ENCODE measurements at regions of chr1 and their contacts with region 1.

Region 1: DNA sequence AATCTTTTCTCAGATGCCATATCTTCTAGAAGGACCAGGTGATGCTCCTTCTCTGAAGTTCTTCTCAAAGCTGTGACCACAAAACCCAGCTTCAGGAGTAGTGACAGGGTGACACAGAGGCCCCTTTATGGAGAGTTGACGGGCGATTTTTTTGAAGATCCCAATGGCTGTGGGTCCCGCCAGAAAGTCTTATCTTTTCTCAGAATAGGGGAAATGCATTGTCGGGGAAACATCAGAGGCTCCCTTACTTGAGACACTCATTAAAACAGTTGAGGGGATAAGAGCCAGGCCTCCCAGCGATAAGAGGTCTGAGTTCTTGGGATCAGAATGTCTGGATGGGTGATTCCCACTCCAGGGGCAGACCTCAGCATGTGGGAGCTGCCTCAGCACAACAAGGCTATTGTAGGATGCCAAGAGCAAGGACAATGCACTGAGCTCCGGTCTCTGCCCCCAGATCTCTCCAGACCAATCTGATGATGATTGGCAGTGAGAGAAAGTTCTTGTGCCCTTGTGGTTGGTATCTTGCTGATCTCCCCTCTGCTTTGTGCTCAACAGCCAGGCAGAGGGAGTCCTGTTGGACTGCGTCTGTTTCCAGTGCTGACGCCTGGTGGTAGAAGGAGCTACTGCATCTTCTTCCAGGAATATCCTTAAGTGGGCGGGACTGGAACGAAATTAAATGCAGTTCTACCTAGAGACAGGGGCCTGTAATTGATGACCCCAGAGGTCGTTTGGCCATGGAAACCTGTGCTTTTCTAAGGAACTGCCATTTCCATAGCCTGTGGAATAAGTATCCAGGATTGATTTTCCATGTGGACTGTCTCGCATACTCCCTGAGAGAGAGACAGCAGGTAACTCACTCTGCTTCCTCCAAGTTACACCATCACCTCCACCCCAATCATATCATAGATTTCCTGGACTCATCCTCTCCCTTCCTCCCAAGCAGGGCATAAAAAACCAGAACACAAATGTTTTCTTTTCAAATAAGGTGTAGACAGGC is 6.8 kb upstream of the ACKR1 start:
- DNase-seq: peak; percentile 26
- H3K4me3 ChIP-seq: no peak overlapping the region
- H3K27ac ChIP-seq: no peak overlapping the region
- H3K27me3 ChIP-seq: no peaks in the 10 kb centered on the region
- CTCF ChIP-seq: peak; percentile 98

Region 2: GRCh38 chr1:159161001-159161718 is 36.7 kb before region 1 on chr1:
- CTCF ChIA-PET with region 1: interaction called, 33 read pairs
- POLR2A ChIA-PET with region 1: no interaction called
- DNase-seq: peak; percentile 56
- H3K4me3 ChIP-seq: no peak overlapping the region
- H3K27ac ChIP-seq: no peak overlapping the region
- H3K27me3 ChIP-seq: no peaks in the 10 kb centered on the region
- CTCF ChIP-seq: peak; percentile 99